AG04450 (cell line): ENCODE measurements at regions of chr18 and their contacts with region 1.

Region 1: DNA sequence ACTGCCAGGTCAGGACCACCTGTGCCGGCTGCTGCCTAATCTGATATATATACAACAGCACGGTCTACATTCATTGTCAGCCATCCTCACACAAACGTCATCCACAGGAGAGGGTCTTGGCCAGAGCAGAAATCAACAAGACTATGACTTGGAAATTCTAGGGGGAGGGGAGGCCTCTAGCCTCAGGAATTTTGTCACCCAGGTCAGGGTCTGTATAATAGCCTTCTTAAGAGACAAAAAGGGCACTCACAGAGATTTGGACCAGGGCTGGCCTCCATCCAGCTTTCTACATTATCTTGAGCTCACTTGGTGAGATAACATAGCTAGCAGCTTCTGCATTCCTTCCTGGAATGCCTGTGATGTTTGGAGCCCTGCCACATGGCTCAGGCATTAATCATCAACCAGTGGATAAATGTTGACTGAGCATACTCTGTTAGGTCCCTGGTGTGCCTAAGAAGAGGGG is 50.4 kb upstream of the CTIF start:
- DNase-seq: peak; percentile 86
- H3K4me3 ChIP-seq: no peak overlapping the region
- H3K27ac ChIP-seq: peak overlapping the region; percentile 21
- H3K27me3 ChIP-seq: no peaks in the 10 kb centered on the region
- CTCF ChIP-seq: no peak

Region 2: GRCh38 chr18:48740846-48741485 is 252.5 kb after region 1 on chr18:
- CTCF ChIA-PET with region 1: interaction called, 12 read pairs
- POLR2A ChIA-PET with region 1: no interaction called
- DNase-seq: no peak
- H3K4me3 ChIP-seq: no peak overlapping the region
- H3K27ac ChIP-seq: no peak overlapping the region
- H3K27me3 ChIP-seq: no peaks in the 10 kb centered on the region
- CTCF ChIP-seq: no peak